ENCODE measurements at regions of chr17 and their contacts with region 1.

Region 1: DNA sequence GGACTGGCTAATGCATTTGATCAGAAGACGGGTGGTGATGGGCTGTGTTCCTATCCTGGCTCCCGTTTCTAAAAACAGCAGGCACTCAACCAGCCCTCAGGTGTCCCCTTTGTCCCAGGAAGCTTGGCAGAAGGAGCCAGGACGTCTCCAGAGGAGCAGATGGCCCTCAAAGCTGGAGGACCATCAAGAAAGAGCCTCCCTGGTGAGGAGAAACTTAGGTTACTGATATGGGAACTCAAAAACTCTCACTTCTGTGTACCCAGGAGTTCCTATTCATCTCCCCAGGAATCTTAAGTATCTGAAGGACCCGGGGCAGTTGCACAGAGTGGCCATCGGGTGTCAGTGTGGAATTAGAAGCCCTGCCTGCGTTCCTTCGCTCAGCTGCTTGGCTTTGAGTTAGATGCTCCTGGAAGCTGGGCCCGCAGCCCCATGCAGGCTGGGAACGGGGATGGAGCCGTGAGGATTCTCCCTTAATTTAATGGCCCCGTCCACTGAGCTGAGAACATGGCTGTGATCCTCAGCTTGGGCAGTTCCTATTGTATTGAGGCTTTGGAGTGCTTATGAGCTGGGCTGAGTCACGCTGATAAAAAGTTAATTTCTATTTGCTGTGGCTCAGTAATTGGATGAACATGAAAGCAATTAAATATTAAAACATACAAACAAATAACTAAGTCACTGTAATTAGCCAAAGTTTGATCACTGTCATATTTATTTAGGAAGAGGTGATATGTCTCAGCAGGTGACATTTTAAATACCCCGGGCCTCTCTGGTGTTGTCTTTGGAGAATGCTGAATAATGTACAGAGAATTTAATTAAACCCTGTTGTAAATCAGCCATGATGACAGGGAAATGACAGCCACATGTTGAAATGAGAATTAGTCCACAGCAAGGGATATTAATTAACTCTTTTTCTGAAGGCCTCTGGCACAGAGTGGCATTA is 402.1 kb downstream of the SEC14L1 start:
- DNase-seq: peak; percentile 78

Region 2: DNA sequence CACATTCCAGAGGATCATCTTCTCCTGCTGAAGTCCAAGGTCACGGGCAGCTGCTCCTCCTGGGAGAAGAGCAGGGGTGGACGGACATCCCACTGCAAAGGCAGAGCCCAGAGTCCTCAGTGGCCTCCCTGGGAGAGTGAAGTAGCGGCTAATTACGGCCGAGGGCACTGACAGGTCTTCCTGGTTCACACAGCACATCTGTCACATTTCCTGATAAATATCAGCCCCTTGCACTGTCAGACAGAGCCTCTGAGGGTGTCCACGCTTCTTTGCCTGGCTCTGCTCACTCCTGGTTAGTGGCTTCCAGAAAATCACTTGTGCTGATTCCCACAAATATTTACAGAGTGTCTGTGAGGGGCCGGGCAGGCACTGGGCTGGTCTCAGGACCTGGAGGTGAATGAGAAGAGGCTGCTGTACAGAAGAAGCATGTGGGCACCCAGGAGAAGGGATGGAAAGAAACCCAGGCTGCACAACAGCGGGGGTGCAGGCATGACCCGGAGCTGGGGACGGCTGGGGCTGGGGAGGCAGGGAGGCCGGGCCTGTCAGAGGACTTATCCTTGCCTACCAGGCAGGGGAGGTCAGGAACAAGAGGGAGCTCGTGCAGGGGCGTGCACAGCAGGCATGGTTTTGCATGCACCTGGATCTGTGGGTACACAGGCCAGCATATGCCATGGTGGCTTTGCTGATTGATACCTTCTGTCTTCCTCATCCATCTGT is 157.5 kb after region 1 on chr17:
- in situ Hi-C with region 1: no loop called
- DNase-seq: no peak

Region 3: DNA sequence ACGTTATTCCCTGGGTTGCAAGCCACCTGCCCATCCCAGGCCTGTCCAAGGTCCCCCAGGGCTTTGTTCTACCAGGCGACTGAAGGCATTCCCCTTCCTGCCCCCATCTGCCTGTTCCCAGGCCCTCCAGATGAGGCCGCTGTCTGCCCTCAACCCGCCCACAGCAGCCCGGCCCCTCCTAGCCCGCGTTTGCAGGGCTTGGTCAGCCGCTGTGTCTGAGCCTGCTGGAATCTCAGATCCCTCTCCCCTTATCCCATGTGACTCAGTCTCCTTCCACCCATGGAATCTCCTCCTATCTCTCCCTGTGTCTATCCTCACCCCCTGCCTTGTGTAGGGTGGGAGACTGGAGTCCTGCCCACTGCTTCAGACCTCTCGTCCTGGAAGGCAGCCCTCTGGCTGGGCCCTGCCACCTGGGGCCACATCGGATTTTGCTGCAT is 229.7 kb after region 1 on chr17:
- in situ Hi-C with region 1: loop called (anchors 25 kb)
- DNase-seq: peak; percentile 69

Measured in KBM-7 (cell line).